ENCODE measurements at regions of chr2 and their contacts with region 1.

Region 1: DNA sequence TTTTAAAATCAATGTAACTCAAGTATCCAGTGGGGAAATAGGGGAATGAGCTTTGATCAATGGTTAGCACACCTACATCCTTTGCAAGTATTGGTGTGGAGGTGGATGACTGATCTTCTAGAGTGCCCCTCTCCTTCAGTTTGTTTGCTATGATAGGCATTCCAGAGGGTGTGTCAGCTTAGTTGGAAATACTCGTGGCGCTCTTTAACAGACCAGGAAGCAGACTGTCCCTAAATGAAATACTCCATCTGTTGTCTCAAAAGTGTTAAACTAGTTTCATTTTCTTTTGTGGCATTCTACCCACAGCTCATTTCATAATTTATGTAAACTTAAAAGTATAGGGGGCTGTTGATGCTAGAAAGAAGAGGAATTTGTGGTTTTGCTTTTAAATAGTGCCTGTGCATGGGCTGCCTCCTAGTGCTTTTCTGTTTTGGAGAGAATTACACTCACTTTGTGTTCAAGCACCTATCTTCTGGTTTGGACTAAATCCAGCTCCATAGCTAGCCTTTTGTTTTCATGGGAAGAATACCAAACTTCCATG is 66.2 kb downstream of the STAT1 start:
- DNase-seq: peak in 7 of 9 donors; percentile 53 to 80 (median 72)
- ATAC-seq: peak; percentile 92
- H3K4me3 ChIP-seq: no peak overlapping the region
- H3K4me3 Mint-ChIP-seq: peak overlapping the region in 7 of 10 donors; percentile 26 to 78 (median 57)
- H3K27ac ChIP-seq: peak overlapping the region; percentile 74
- H3K27ac Mint-ChIP-seq: peak overlapping the region in 4 of 9 donors; percentile 68 to 98 (median 96)
- H3K4me1 ChIP-seq: peaks cover 12 to 27% of the 10 kb centered on the region in 2 donors
- H3K4me1 Mint-ChIP-seq: peaks cover 7 to 19% (median 15%) of the 10 kb centered on the region in 7 donors
- H3K27me3 ChIP-seq: no peaks in the 10 kb centered on the region
- H3K27me3 Mint-ChIP-seq: no peaks in the 10 kb centered on the region

Region 2: GRCh38 chr2:190382851-190383250 is 564.9 kb before region 1 on chr2:
- CTCF ChIA-PET with region 1: no interaction called
- POLR2A ChIA-PET with region 1: no interaction called
- intact Hi-C with region 1: loop called in 1 of 2 experiments (anchors 2 kb)
- DNase-seq: peak in 7 of 9 donors; percentile 48 to 74 (median 65)
- ATAC-seq: peak; percentile 84
- H3K4me3 ChIP-seq: no peak overlapping the region
- H3K4me3 Mint-ChIP-seq: no peak overlapping the region
- H3K27ac ChIP-seq: no peak overlapping the region
- H3K27ac Mint-ChIP-seq: peak overlapping the region in 2 of 9 donors; percentile 28 to 68
- H3K4me1 ChIP-seq: no peaks in the 10 kb centered on the region
- H3K4me1 Mint-ChIP-seq: peaks cover 0 to 6% (median 0%) of the 10 kb centered on the region in 7 donors
- H3K27me3 ChIP-seq: no peaks in the 10 kb centered on the region
- H3K27me3 Mint-ChIP-seq: peaks cover 0 to 2% (median 0%) of the 10 kb centered on the region in 5 donors

Region 3: DNA sequence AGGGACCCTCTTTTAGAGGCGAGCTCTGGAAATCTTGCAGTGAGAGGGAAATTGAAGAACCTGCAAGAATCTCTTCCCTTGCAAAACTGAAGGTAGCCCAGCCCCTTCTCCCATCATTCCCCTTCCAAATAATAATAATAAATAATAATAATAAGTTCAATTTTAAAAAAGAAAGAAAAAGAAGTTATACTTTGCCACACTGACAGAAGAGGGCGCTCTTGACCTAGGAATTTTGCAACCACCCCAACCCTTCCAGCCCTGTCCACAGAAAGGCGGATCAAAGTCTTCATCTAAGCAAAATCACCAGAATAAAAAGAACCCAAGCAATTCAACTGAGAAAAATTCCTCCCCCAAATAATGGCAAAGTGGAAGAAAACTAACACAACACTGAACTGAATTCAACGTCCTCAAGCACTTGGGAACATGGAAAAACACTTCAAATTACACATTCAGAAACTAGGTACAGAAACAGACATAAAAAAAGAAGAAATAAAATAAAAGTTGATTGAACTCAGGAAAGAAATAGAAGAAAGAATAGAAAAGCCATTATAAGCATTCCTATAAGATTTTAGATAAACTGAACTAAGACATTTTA is 166.1 kb before region 1 on chr2:
- CTCF ChIA-PET with region 1: interaction called, 6 read pairs
- POLR2A ChIA-PET with region 1: no interaction called
- intact Hi-C with region 1: loop called (anchors 1 to 5 kb)
- DNase-seq: peak in 8 of 9 donors; percentile 27 to 60 (median 46)
- ATAC-seq: peak; percentile 77
- H3K4me3 ChIP-seq: no peak overlapping the region
- H3K4me3 Mint-ChIP-seq: no peak overlapping the region
- H3K27ac ChIP-seq: no peak overlapping the region
- H3K27ac Mint-ChIP-seq: no peak overlapping the region
- H3K4me1 ChIP-seq: no peaks in the 10 kb centered on the region
- H3K4me1 Mint-ChIP-seq: peaks cover 0 to 11% (median 1%) of the 10 kb centered on the region in 7 donors
- H3K27me3 ChIP-seq: no peaks in the 10 kb centered on the region
- H3K27me3 Mint-ChIP-seq: peaks cover 0 to 8% (median 0%) of the 10 kb centered on the region in 5 donors

Region 4: DNA sequence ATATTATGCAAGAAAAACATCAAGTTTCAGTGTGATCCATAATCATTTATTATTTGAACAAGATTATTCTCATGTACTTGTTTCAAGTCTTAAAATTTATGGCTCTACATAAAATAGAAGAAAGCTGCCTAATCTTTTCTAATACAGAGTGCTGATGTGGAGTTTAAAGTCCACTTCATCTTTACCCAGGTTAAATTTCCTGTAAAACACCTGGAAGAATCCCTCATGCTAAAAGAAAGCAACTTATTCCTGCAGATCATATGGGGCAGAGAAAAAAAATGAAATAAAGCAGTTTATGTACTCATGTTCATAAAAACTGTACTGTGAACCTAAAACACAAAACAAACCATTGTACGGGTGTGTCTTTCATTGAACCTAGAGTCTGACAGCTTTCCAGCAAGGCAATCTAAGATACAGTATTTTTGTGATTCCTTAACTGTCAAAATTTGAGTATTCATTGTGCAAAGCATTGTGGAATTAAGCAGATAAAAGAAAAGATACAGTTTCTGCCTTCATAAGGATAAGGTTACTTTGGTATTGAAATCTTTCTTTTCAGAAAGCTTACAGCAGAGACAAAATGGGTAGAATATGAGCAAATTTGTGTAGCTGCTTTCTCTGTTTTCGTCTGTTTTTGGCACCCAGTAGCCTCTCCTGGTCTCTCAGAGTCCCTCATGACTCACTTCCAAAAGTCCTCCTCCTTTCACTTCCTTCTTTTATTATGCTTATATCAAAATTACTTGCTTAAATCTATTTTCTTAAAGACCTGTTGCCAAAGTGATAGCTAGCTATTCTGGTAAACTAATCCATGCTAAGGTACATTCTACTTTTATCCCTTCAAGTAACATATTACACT is 94.0 kb before region 1 on chr2:
- CTCF ChIA-PET with region 1: interaction called, 23 read pairs
- POLR2A ChIA-PET with region 1: interaction called, 8 read pairs
- intact Hi-C with region 1: loop called (anchors 1 to 5 kb)
- DNase-seq: no peak
- ATAC-seq: no peak
- H3K4me3 ChIP-seq: no peak overlapping the region
- H3K4me3 Mint-ChIP-seq: no peak overlapping the region
- H3K27ac ChIP-seq: no peak overlapping the region
- H3K27ac Mint-ChIP-seq: no peak overlapping the region
- H3K4me1 ChIP-seq: no peaks in the 10 kb centered on the region
- H3K4me1 Mint-ChIP-seq: no peaks in the 10 kb centered on the region
- H3K27me3 ChIP-seq: no peaks in the 10 kb centered on the region
- H3K27me3 Mint-ChIP-seq: no peaks in the 10 kb centered on the region

Region 5: GRCh38 chr2:190911813-190912212 is 36.0 kb before region 1 on chr2:
- CTCF ChIA-PET with region 1: no interaction called
- POLR2A ChIA-PET with region 1: interaction called, 3 read pairs
- intact Hi-C with region 1: loop called in 1 of 2 experiments (anchors 5 kb)
- DNase-seq: no peak
- ATAC-seq: peak; percentile 34
- H3K4me3 ChIP-seq: no peak overlapping the region
- H3K4me3 Mint-ChIP-seq: peak overlapping the region in 1 of 10 donors; percentile 32
- H3K27ac ChIP-seq: no peak overlapping the region
- H3K27ac Mint-ChIP-seq: peak overlapping the region in 4 of 9 donors; percentile 2 to 41 (median 26)
- H3K4me1 ChIP-seq: peaks cover 0 to 7% of the 10 kb centered on the region in 2 donors
- H3K4me1 Mint-ChIP-seq: peaks cover 11 to 47% (median 30%) of the 10 kb centered on the region in 7 donors
- H3K27me3 ChIP-seq: no peaks in the 10 kb centered on the region
- H3K27me3 Mint-ChIP-seq: no peaks in the 10 kb centered on the region

Region 6: DNA sequence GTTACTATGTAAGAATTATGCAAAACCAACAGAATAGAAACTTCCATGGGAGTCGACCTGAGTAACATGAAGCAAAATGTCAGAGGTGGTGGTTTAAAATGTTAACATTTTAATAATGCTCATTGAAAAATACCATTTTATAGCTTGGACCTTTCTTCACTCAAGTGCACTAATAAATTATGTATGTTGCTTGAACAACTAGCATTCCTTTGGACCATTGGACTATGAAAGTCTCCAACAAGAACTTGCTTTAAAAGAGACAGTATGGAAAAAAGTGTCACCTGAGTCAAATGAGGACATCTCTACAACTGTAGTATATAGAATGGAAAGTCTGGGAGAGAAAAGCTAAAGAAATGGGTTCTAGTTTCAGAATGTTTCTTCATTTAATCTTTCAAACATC is 15.3 kb before region 1 on chr2:
- CTCF ChIA-PET with region 1: interaction called, 4 read pairs
- POLR2A ChIA-PET with region 1: no interaction called
- intact Hi-C with region 1: loop called in 1 of 2 experiments (anchors 2 kb)
- DNase-seq: no peak
- ATAC-seq: no peak
- H3K4me3 ChIP-seq: no peak overlapping the region
- H3K4me3 Mint-ChIP-seq: no peak overlapping the region
- H3K27ac ChIP-seq: no peak overlapping the region
- H3K27ac Mint-ChIP-seq: peak overlapping the region in 3 of 9 donors; percentile 9 to 30 (median 16)
- H3K4me1 ChIP-seq: peaks cover 0 to 8% of the 10 kb centered on the region in 2 donors
- H3K4me1 Mint-ChIP-seq: peaks cover 0 to 46% (median 9%) of the 10 kb centered on the region in 7 donors
- H3K27me3 ChIP-seq: no peaks in the 10 kb centered on the region
- H3K27me3 Mint-ChIP-seq: no peaks in the 10 kb centered on the region

Region 7: DNA sequence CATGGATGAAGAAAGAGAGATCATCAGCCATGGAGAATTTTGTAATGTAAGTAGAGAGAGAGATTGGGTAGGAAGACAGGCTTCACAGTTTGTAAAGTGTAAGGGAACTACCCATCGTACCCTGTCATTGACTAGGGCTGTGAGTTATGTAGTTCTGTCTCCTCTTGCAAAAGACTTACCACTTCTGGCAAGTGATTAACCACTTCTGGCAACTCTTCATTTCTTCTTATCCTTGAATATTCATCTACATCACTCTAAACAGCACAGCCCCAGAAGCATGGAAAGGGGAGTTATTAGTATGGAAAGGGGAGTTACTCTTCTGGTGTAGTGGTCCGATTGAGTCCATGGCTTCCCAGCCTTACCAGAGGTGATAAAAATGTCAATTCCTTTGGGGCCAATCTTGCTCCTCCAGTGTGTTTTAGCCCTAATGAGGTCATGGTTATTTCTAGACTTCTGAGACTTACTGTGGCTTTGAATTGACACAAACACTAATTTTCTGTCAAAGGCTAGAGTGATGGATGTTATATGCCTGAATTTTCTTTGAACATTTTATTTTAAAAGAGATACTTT is 14.2 kb after region 1 on chr2:
- CTCF ChIA-PET with region 1: interaction called, 3 read pairs
- POLR2A ChIA-PET with region 1: interaction called, 5 read pairs
- intact Hi-C with region 1: loop called in 1 of 2 experiments (anchors 2 kb)
- DNase-seq: no peak
- ATAC-seq: no peak
- H3K4me3 ChIP-seq: no peak overlapping the region
- H3K4me3 Mint-ChIP-seq: no peak overlapping the region
- H3K27ac ChIP-seq: no peak overlapping the region
- H3K27ac Mint-ChIP-seq: peak overlapping the region; percentile 28 to 85 (median 61)
- H3K4me1 ChIP-seq: no peaks in the 10 kb centered on the region
- H3K4me1 Mint-ChIP-seq: peaks cover 13 to 69% (median 42%) of the 10 kb centered on the region in 7 donors
- H3K27me3 ChIP-seq: no peaks in the 10 kb centered on the region
- H3K27me3 Mint-ChIP-seq: no peaks in the 10 kb centered on the region

Measured in naive thymus-derived CD4-positive, alpha-beta T cell (primary cell).